Ovary (tissue), 10 donors: ENCODE measurements at regions of chr5 and their contacts with region 1.

Region 1: DNA sequence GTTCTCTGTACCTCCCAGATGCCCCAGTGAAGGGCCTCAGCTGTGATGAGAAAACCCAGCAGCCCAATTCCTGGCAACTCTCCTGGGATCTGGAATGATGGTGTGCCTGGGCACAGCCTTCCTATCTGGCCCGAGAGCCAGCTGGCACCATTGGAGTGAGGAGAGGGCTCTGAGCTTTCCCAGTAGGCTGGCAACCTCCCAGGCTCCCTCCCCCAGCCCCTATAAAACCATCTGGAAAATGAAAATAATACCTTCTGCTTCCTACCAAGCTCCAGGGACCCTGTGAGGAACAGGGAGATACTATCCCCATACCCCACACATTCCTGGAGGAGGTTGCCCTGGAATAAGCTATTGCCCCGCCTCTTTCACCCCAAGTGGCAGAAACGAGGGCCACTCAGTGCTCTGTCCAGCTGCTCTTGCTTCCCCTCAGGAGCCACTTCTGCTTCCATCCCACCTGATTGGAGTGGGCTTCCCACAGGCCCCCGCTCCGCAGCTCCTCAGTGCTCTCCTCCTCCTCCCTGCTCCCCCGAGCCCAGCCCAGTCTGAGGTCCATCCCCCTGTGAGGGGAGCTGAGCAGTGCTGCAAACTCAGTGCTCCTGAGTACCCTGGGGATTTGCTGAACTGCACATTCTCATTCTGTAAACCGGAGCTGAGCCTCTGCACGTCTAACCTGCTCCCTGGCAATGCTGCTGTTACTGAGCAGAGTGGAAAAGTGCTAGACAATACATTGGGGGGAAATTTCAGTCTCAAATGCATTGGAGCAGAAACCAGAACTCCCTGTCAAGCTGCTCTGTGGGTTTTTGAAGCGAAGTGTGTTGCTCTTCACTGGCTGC is 74.7 kb downstream of the THBS4 start:
- DNase-seq: peak in 3 of 5 donors; percentile 35 to 68 (median 37)
- H3K4me3 ChIP-seq: no peak overlapping the region
- H3K27ac ChIP-seq: no peak overlapping the region
- H3K4me1 ChIP-seq: peaks cover 8% of the 10 kb centered on the region
- H3K27me3 ChIP-seq: no peaks in the 10 kb centered on the region
- CTCF ChIP-seq: no peak
- EP300 ChIP-seq: no peak
- POLR2A ChIP-seq: no peak

Region 2: GRCh38 chr5:80268916-80269315 is 159.1 kb after region 1 on chr5:
- intact Hi-C with region 1: loop called in 1 of 4 experiments (anchors 10 kb)
- DNase-seq: no peak
- H3K4me3 ChIP-seq: no peak overlapping the region
- H3K27ac ChIP-seq: no peak overlapping the region
- H3K4me1 ChIP-seq: no peaks in the 10 kb centered on the region
- H3K27me3 ChIP-seq: no peaks in the 10 kb centered on the region
- CTCF ChIP-seq: no peak
- EP300 ChIP-seq: no peak
- POLR2A ChIP-seq: no peak